Mammary epithelial cell (primary cell): ENCODE measurements at regions of chr6 and their contacts with region 1.

Region 1: GRCh38 chr6:137764464-137764863 is 102.6 kb upstream of the TNFAIP3 start:
- DNase-seq: peak; percentile 92
- H3K4me3 ChIP-seq: no peak overlapping the region
- H3K27ac ChIP-seq: peak overlapping the region; percentile 83
- H3K4me1 ChIP-seq: peaks cover 41% of the 10 kb centered on the region
- H3K27me3 ChIP-seq: no peaks in the 10 kb centered on the region
- CTCF ChIP-seq: no peak

Region 2: DNA sequence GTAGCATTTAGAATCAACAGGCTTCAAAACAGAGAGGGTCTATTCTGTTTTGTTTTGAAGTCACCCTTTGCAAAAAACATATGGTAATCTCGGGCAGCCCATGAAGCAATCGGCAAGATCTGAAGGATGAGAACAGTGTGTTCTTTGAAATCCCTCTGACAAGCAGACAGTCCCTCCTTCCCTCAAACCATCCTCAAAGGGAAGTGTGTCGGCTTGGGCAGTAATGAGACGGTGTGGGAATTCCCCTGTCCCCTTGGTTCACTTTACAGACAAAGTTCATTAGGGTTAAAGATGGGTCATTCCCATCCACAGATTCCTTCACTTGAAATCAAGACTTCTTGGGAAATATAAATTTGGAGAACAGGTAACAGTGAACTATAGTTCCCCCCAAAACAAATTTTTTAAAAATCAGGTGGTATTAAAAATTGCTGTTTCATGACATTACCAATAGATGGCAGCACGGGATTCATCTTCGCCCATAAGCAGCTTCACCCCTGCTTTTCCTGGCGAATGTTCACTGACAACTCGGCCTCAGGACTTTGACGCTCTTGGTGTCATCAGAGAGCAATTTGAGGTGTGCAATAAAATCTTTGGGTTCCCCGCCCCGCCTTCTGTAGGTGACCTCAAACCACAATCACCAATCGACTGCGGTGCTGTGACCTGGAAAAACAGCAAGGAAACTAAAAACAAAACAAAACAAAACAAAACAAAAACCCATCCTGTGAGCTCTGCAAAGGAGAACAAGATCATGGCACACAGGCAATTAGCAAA is 56.7 kb before region 1 on chr6:
- CTCF ChIA-PET with region 1: no interaction called
- dilution Hi-C with region 1: no loop called
- in situ Hi-C with region 1: no loop called
- intact Hi-C with region 1: loop called (anchors 1 kb)
- DNase-seq: peak; percentile 92
- H3K4me3 ChIP-seq: no peak overlapping the region
- H3K27ac ChIP-seq: peak overlapping the region; percentile 64
- H3K4me1 ChIP-seq: peaks cover 7% of the 10 kb centered on the region
- H3K27me3 ChIP-seq: no peaks in the 10 kb centered on the region
- CTCF ChIP-seq: peak; percentile 65 to 75

Region 3: GRCh38 chr6:137717074-137718073 is 47.1 kb before region 1 on chr6:
- CTCF ChIA-PET with region 1: no interaction called
- dilution Hi-C with region 1: no loop called
- in situ Hi-C with region 1: no loop called
- intact Hi-C with region 1: loop called (anchors 2 kb)
- DNase-seq: peak; percentile 98
- H3K4me3 ChIP-seq: no peak overlapping the region
- H3K27ac ChIP-seq: peak overlapping the region; percentile 88
- H3K4me1 ChIP-seq: peaks cover 18% of the 10 kb centered on the region
- H3K27me3 ChIP-seq: no peaks in the 10 kb centered on the region
- CTCF ChIP-seq: no peak

Region 4: DNA sequence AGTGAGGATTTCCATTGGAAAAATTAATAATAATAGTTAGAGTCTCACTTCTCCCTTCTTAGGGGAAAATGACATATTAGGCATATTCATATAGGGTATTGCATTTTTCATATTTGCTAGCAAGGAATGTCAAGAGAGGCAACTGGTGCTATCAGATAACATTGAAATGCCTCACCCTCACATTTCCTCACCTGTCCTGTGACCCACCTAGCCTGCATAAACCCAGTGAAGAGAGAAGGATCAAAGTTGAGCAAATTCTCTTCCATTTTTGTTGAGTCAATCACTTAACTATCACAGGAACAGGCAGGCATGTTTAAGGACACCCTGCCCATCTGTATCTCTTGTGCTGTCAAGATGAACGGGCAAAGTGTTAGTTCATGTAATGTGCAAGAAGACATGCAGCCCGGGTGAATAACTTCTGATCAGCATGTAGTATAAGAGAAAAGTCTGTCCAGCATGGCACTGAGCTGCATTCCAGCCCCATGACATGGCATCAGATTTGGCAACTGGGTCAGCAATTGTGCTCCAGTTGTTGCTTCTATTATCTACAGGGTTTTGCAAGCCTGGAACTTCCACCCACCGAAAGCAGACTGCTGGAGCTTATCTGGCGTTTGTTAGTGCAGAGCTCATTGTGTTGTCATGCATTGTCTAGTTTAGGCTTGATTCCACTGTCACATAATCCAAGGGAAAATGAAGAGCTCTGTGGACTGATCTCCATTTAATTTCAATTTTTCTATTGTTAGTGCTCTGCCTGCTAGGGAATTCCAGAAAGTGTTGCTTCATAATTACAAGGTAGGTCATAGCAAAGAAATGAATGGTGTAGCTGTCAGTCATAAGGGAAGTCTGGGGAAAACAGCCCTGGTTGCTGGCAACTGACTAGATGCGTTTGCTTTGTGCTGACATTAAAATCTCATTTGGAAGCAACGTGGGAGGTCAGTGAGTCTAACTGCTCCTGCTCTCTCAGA is 35.8 kb before region 1 on chr6:
- CTCF ChIA-PET with region 1: no interaction called
- dilution Hi-C with region 1: no loop called
- in situ Hi-C with region 1: no loop called
- intact Hi-C with region 1: loop called (anchors 1 kb)
- DNase-seq: peak; percentile 99
- H3K4me3 ChIP-seq: no peak overlapping the region
- H3K27ac ChIP-seq: peak overlapping the region; percentile 91
- H3K4me1 ChIP-seq: peaks cover 51% of the 10 kb centered on the region
- H3K27me3 ChIP-seq: no peaks in the 10 kb centered on the region
- CTCF ChIP-seq: no peak

Region 5: GRCh38 chr6:137853569-137854213 is 89.2 kb after region 1 on chr6:
- CTCF ChIA-PET with region 1: no interaction called
- dilution Hi-C with region 1: no loop called
- in situ Hi-C with region 1: no loop called
- intact Hi-C with region 1: loop called (anchors 2 kb)
- DNase-seq: peak; percentile 89
- H3K4me3 ChIP-seq: no peak overlapping the region
- H3K27ac ChIP-seq: peak overlapping the region; percentile 89
- H3K4me1 ChIP-seq: peaks cover 26% of the 10 kb centered on the region
- H3K27me3 ChIP-seq: no peaks in the 10 kb centered on the region
- CTCF ChIP-seq: no peak